ENCODE measurements at regions of chr22 and their contacts with region 1.

Region 1: GRCh38 chr22:38267086-38267485 is 5.7 kb downstream of the TMEM184B start:
- DNase-seq: no peak
- H3K4me3 ChIP-seq: no peak overlapping the region
- CTCF ChIP-seq: no peak

Region 2: GRCh38 chr22:38228873-38229740 is 38.0 kb before region 1 on chr22:
- in situ Hi-C with region 1: loop called (anchors 5 kb)
- DNase-seq: no peak
- H3K4me3 ChIP-seq: no peak overlapping the region
- CTCF ChIP-seq: no peak

Region 3: GRCh38 chr22:38347897-38348750 is 81.0 kb after region 1 on chr22:
- in situ Hi-C with region 1: loop called (anchors 5 kb)
- DNase-seq: no peak
- H3K4me3 ChIP-seq: no peak overlapping the region
- CTCF ChIP-seq: no peak

Measured in astrocyte of the cerebellum (primary cell).